ENCODE measurements at regions of chr6 and their contacts with region 1.

Region 1: GRCh38 chr6:90238496-90239266 is 58.0 kb downstream of the BACH2 start:
- DNase-seq: no peak
- ATAC-seq: no peak
- H3K4me3 Mint-ChIP-seq: peak overlapping the region; percentile 54
- H3K27ac Mint-ChIP-seq: peak overlapping the region; percentile 85
- H3K4me1 Mint-ChIP-seq: peaks cover 64% of the 10 kb centered on the region
- H3K27me3 Mint-ChIP-seq: no peaks in the 10 kb centered on the region

Region 2: GRCh38 chr6:90179190-90180169 is 59.2 kb before region 1 on chr6:
- POLR2A ChIA-PET with region 1: no interaction called
- DNase-seq: no peak
- ATAC-seq: no peak
- H3K4me3 Mint-ChIP-seq: peak overlapping the region; percentile 82
- H3K27ac Mint-ChIP-seq: peak overlapping the region; percentile 91
- H3K4me1 Mint-ChIP-seq: peaks cover 79% of the 10 kb centered on the region
- H3K27me3 Mint-ChIP-seq: no peaks in the 10 kb centered on the region

Region 3: DNA sequence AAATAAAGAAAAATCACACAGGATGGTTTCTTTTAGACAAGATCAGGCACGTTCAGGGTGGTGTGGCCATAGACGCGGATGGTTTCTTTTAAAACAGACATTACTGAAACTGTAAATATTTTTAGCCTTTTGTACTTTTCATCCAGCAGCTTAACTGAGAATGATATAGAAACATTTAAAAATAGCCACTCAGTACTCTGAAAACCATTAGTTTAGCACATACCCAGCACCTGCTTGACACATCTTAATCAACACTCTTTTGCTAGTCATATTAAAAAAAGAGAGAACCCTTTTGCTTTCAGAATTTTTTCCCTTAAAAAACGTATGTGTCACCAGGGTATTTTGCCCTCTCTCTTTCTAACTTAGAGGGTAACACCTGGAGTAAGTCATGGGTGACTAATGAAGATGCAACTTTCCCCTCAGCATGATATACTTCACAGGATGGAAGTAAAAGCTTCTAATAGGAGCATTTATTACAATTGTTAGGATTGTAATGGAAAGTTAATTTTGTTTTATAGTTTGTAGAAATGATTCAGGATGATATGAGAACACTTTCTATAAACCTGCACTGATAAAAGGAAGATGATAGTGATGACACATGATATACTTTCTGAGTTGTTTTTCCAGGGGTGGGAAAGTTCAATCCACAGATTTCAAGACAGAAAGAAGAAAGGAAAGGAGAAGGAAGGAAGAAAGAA is 12.8 kb after region 1 on chr6:
- POLR2A ChIA-PET with region 1: interaction called, 12 read pairs
- DNase-seq: no peak
- ATAC-seq: peak; percentile 22
- H3K4me3 Mint-ChIP-seq: peak overlapping the region; percentile 25
- H3K27ac Mint-ChIP-seq: peak overlapping the region; percentile 84
- H3K4me1 Mint-ChIP-seq: peaks cover 70% of the 10 kb centered on the region
- H3K27me3 Mint-ChIP-seq: no peaks in the 10 kb centered on the region

Measured in activated naive CD8-positive, alpha-beta T cell treated with anti-CD3 and anti-CD28 coated beads, Interleukin-2, amount 10 ng/mL, durations not matched to agents 7 days and 5 days (primary cell).